ENCODE measurements at regions of chr6 and their contacts with region 1.

Region 1: GRCh38 chr6:37538107-37538506 is 38.4 kb upstream of the CCDC167 start:
- DNase-seq: no peak
- ATAC-seq: peak; percentile 93
- H3K4me3 ChIP-seq: no peak overlapping the region
- H3K27ac ChIP-seq: no peak overlapping the region
- H3K4me1 ChIP-seq: no peaks in the 10 kb centered on the region
- H3K27me3 ChIP-seq: no peaks in the 10 kb centered on the region
- CTCF ChIP-seq: peak; percentile 52 to 85 (median 77)
- EP300 ChIP-seq: no peak
- POLR2A ChIP-seq: no peak
- RAD21 ChIP-seq: peak; percentile 91

Region 2: DNA sequence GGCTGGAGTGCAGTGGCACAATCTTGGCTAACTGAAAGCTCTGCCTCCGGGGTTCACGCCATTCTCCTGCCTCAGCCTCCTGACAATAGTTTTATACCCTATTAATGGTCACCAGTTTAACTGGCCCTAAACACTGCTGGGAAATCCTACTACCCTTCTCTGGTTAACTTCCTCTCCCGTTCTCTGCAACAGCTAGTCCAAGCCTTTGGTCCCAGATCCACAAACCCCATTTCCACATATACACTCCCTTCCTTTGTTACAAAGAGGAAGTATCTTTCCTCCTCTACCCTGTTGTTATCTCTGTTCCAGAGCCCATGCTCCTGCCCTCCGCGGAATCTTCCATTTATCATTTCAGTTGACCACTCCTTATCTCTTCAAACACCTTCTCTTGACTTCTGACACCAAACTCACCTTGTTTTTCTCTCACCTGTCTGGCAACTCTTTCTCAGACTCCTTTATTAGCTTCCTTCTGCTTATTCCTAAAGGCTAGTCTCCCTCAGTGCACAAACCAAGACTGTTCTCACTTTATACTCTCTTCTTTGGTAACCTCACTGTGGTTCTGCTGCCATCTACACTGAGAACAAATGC is 305.6 kb before region 1 on chr6:
- CTCF ChIA-PET with region 1: no interaction called
- POLR2A ChIA-PET with region 1: no interaction called
- RAD21 ChIA-PET with region 1: no interaction called
- SMC1A ChIA-PET with region 1: no interaction called
- in situ Hi-C with region 1: no loop called
- intact Hi-C with region 1: no loop called
- DNase-seq: no peak
- ATAC-seq: no peak
- H3K4me3 ChIP-seq: no peak overlapping the region
- H3K27ac ChIP-seq: no peak overlapping the region
- H3K4me1 ChIP-seq: no peaks in the 10 kb centered on the region
- H3K27me3 ChIP-seq: no peaks in the 10 kb centered on the region
- CTCF ChIP-seq: no peak
- EP300 ChIP-seq: no peak
- POLR2A ChIP-seq: no peak
- RAD21 ChIP-seq: no peak

Region 3: GRCh38 chr6:37489660-37490361 is 48.3 kb before region 1 on chr6:
- CTCF ChIA-PET with region 1: interaction called, 14 read pairs
- POLR2A ChIA-PET with region 1: interaction called, 5 read pairs
- RAD21 ChIA-PET with region 1: interaction called, 29 read pairs
- SMC1A ChIA-PET with region 1: interaction called, 18 read pairs
- in situ Hi-C with region 1: no loop called
- intact Hi-C with region 1: no loop called
- DNase-seq: no peak
- ATAC-seq: peak; percentile 54
- H3K4me3 ChIP-seq: no peak overlapping the region
- H3K27ac ChIP-seq: peak overlapping the region; percentile 69
- H3K4me1 ChIP-seq: peaks cover 58% of the 10 kb centered on the region
- H3K27me3 ChIP-seq: no peaks in the 10 kb centered on the region
- CTCF ChIP-seq: peak; percentile 11 to 35 (median 14); a peak in 4 of 6 replicates
- EP300 ChIP-seq: no peak
- POLR2A ChIP-seq: 0 out of 2 replicates have a peak, but pooled peaks have one; percentile 9
- RAD21 ChIP-seq: no peak

Region 4: GRCh38 chr6:37516076-37516919 is 21.8 kb before region 1 on chr6:
- CTCF ChIA-PET with region 1: interaction called, 24 read pairs
- POLR2A ChIA-PET with region 1: no interaction called
- RAD21 ChIA-PET with region 1: interaction called, 20 read pairs
- SMC1A ChIA-PET with region 1: interaction called, 11 read pairs
- in situ Hi-C with region 1: no loop called
- intact Hi-C with region 1: no loop called
- DNase-seq: peak; percentile 78
- ATAC-seq: peak; percentile 94
- H3K4me3 ChIP-seq: 0 out of 2 replicates have a peak overlapping the region, but pooled peaks have one; percentile 10
- H3K27ac ChIP-seq: peak overlapping the region; percentile 65
- H3K4me1 ChIP-seq: peaks cover 33% of the 10 kb centered on the region
- H3K27me3 ChIP-seq: no peaks in the 10 kb centered on the region
- CTCF ChIP-seq: peak in 2 of 3 experiments; percentile 3 to 11; a peak in 1 of 6 replicates
- EP300 ChIP-seq: peak in 1 of 2 experiments; percentile 26; a peak in 1 of 4 replicates
- POLR2A ChIP-seq: peak; percentile 69
- RAD21 ChIP-seq: no peak

Region 5: DNA sequence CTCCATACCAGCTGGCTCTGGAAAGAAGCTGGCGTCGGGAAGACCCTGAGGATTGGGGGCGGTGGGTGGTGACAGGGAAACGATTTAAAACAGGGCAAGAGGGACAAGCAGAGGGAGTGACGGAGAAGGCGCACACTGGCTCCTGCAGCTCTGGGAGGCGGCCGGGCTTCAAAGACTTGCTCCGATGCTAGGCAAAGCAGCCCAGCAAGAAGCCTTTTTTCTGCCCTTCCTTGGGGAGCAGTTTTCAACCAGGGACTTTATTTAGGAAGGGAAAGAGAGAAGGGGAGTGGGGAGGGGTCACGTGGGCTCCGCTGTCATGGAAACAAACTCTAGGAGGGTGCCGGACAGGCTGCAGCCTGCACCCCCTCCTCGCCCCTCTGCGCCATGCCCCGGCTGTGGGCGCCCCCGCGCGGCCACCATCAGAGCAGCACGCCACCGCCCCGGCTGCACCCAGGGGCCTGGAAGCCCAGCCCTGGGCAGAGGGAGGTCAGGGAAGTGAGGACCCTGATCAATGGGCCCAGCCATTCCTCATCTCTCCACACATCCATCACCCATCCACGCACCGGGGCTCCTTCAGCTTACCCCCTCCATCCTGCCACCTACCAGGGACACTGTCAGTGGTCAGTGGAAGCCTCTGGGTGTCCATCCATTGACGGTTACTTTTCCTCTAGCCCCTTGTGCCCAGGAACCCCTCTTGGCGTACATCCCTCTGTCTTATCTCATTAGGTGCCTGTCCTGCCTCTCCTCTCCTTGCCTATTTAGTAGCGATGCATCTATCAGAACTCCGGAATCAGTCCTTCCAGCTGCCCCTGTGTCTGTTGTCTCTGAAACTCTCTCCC is 28.2 kb after region 1 on chr6:
- CTCF ChIA-PET with region 1: interaction called, 590 read pairs
- POLR2A ChIA-PET with region 1: interaction called, 46 read pairs
- RAD21 ChIA-PET with region 1: interaction called, 266 read pairs
- SMC1A ChIA-PET with region 1: interaction called, 346 read pairs
- in situ Hi-C with region 1: no loop called
- intact Hi-C with region 1: loop called (anchors 1 kb)
- DNase-seq: no peak
- ATAC-seq: peak; percentile 73
- H3K4me3 ChIP-seq: peak overlapping the region; percentile 61
- H3K27ac ChIP-seq: peak overlapping the region; percentile 91
- H3K4me1 ChIP-seq: peaks cover 52% of the 10 kb centered on the region
- H3K27me3 ChIP-seq: no peaks in the 10 kb centered on the region
- CTCF ChIP-seq: peak; percentile 86 to 97 (median 89)
- EP300 ChIP-seq: no peak
- POLR2A ChIP-seq: no peak
- RAD21 ChIP-seq: peak; percentile 93

Region 6: DNA sequence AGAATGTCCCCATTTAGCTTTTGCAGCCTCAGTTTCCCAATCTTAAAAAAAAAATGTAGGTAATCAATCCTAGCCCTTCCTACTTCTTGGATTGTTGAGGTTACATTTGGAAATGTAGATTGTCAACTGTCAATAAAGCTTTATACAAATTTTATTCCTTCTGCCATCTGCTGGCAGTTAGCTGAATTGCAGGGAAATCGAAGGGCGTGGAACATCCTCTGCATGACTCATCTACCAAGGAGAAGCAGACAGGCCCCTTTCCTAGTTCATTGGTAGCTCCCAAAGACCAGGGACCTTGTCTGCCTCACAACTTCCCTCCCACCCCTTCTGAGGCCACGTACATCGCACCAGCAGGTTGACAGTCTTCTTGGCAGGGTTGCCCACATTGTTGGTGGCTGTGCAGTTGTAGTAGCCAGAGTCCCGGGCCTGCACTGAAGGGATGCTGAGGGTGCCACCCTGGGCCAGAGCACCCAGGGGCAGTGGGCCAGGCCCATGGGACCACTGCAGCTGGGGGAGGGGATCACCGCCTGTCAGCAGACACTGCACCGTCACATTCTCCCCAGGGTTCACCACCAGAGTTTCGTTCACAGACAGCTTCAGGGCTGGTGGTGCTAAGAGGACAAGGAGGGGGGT is 115.9 kb after region 1 on chr6:
- CTCF ChIA-PET with region 1: interaction called, 15 read pairs
- POLR2A ChIA-PET with region 1: no interaction called
- RAD21 ChIA-PET with region 1: interaction called, 3 read pairs
- SMC1A ChIA-PET with region 1: interaction called, 5 read pairs
- in situ Hi-C with region 1: no loop called
- intact Hi-C with region 1: no loop called
- DNase-seq: peak; percentile 19
- ATAC-seq: peak; percentile 54
- H3K4me3 ChIP-seq: no peak overlapping the region
- H3K27ac ChIP-seq: no peak overlapping the region
- H3K4me1 ChIP-seq: no peaks in the 10 kb centered on the region; the same call in 1 of the 2 replicates
- H3K27me3 ChIP-seq: peaks cover 2 to 3% of the 10 kb centered on the region in 2 experiments; a peak in 3 of 4 replicates
- CTCF ChIP-seq: peak; percentile 33 to 88 (median 57)
- EP300 ChIP-seq: no peak
- POLR2A ChIP-seq: no peak
- RAD21 ChIP-seq: 0 out of 2 replicates have a peak, but pooled peaks have one; percentile 26

Measured in GM12878 (cell line).